ENCODE measurements at regions of chr12 and their contacts with region 1.

Region 1: DNA sequence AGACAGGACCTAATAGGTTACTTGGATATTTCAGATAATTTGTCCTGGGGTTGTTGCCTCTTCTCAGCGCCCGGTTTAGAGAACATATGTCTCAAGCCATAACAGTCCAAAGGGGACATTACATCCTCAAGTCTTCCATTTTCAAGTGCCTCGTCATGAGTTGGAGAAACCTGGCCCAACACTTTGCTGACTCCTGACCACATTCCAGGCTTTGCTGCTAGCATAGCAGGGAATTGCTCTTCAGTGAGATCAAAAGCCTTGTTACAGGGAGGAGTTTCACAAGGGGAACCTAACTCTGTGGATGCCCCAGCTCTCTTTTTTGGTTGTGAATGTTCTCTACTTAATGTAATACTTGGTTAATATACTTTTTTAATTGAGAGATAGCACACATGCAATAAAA is 8.2 kb upstream of the MMP19 start:
- DNase-seq: no peak
- ATAC-seq: no peak
- H3K4me3 ChIP-seq: no peak overlapping the region
- H3K4me3 Mint-ChIP-seq: no peak overlapping the region
- H3K27ac ChIP-seq: no peak overlapping the region
- H3K27ac Mint-ChIP-seq: no peak overlapping the region
- H3K4me1 ChIP-seq: no peaks in the 10 kb centered on the region
- H3K4me1 Mint-ChIP-seq: no peaks in the 10 kb centered on the region
- H3K27me3 ChIP-seq: peaks cover 0 to 2% of the 10 kb centered on the region in 2 experiments
- H3K27me3 Mint-ChIP-seq: peaks cover 8% of the 10 kb centered on the region
- CTCF ChIP-seq: no peak

Region 2: GRCh38 chr12:55901881-55902490 is 51.1 kb after region 1 on chr12:
- CTCF ChIA-PET with region 1: no interaction called
- POLR2A ChIA-PET with region 1: no interaction called
- intact Hi-C with region 1: loop called in 1 of 2 experiments (anchors 5 kb)
- DNase-seq: no peak
- ATAC-seq: no peak
- H3K4me3 ChIP-seq: no peak overlapping the region
- H3K4me3 Mint-ChIP-seq: no peak overlapping the region
- H3K27ac ChIP-seq: no peak overlapping the region
- H3K27ac Mint-ChIP-seq: peak overlapping the region; percentile 15
- H3K4me1 ChIP-seq: peaks cover 4% of the 10 kb centered on the region
- H3K4me1 Mint-ChIP-seq: peaks cover 10% of the 10 kb centered on the region
- H3K27me3 ChIP-seq: no peaks in the 10 kb centered on the region
- H3K27me3 Mint-ChIP-seq: no peaks in the 10 kb centered on the region
- CTCF ChIP-seq: no peak

Region 3: DNA sequence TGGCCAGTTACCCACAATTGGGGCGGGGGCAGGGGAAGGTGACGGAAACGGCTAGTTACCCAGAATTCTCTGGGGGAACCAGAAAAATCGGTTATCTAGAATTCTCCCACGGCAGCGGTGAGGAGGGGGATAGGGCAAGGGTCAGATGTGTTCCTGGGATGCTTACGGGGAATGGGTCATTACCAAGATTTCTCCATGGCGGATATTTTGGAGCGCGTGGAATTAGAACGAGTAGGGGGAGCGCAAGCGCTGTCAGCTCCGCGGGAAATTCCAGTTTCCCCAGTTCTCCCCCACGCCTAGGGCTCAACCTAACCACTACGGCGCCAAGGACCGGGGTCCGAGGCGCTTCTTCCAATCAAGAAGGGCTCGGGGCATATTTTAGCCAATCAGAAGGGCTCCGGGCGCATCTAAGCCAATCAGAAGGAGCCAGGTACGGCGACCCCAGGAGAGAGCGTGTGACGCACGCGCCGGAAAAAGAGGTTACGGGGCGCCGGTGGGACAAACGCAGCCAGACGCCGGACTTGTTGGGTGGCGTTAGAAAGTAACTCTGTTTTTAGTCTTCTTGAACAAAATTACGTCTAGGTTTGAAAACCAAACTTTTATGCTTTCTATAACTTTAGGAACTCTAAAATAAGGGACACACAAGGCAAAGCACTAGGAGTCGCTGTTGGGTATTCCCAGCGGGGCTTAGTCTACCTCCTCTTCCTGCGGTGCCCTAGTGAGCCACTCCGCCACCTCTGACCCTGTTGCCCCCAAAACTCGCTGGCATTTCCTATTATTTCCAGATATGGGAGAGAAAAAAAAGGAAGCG is 483.0 kb after region 1 on chr12 and contains the start of gene PAN2:
- CTCF ChIA-PET with region 1: no interaction called
- POLR2A ChIA-PET with region 1: no interaction called
- intact Hi-C with region 1: no loop called
- DNase-seq: peak; percentile 87 to 98 (median 93)
- ATAC-seq: peak; percentile 80
- H3K4me3 ChIP-seq: peak within 1 kb of the TSS; percentile 47 to 85
- H3K4me3 Mint-ChIP-seq: peak within 1 kb of the TSS; percentile 96
- H3K27ac ChIP-seq: peak within 1 kb of the TSS; percentile 97 to 100
- H3K27ac Mint-ChIP-seq: peak within 1 kb of the TSS; percentile 100
- H3K4me1 ChIP-seq: peaks cover 27% of the 10 kb centered on the region
- H3K4me1 Mint-ChIP-seq: peaks cover 53% of the 10 kb centered on the region
- H3K27me3 ChIP-seq: no peaks in the 10 kb centered on the region
- H3K27me3 Mint-ChIP-seq: no peaks in the 10 kb centered on the region
- CTCF ChIP-seq: peak; percentile 64
- total RNA-seq, gene PAN2: 111 to 113 TPM